PC-9 (cell line): ENCODE measurements at regions of chr10 and their contacts with region 1.

Region 1: DNA sequence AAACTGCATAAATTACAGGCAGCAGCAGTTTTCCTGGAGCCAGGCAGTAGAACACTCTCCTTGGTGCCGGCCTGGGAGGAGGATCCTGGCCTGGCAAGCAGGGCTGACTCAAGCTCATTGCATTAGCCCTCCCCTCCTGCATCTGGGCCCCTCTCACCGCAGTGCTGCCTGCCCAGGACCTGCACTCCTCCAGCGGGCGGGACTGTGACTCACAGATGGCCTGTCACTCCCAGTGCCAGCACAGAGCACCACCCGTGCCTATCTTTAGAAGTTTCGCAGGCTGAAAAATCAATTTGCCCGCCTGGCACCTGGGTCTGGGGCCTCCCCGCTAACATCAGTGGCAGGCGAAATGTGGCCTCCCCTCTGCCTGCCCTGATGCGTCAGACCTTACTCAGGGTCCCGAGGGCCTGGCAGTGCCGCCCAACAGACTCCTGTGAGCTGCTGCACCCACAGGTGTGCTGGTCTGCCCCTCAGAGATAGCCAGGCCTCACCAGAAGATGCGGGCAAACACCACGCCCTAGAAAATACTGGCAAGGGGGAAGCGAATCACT is 123.8 kb downstream of the KCNMA1 start:
- DNase-seq: peak; percentile 92 to 93
- H3K4me3 ChIP-seq: peak overlapping the region; percentile 24; the same call in 1 of the 2 replicates
- H3K27ac ChIP-seq: peak overlapping the region; percentile 73
- H3K4me1 ChIP-seq: peaks cover 47% of the 10 kb centered on the region
- H3K27me3 ChIP-seq: no peaks in the 10 kb centered on the region
- CTCF ChIP-seq: no peak

Region 2: DNA sequence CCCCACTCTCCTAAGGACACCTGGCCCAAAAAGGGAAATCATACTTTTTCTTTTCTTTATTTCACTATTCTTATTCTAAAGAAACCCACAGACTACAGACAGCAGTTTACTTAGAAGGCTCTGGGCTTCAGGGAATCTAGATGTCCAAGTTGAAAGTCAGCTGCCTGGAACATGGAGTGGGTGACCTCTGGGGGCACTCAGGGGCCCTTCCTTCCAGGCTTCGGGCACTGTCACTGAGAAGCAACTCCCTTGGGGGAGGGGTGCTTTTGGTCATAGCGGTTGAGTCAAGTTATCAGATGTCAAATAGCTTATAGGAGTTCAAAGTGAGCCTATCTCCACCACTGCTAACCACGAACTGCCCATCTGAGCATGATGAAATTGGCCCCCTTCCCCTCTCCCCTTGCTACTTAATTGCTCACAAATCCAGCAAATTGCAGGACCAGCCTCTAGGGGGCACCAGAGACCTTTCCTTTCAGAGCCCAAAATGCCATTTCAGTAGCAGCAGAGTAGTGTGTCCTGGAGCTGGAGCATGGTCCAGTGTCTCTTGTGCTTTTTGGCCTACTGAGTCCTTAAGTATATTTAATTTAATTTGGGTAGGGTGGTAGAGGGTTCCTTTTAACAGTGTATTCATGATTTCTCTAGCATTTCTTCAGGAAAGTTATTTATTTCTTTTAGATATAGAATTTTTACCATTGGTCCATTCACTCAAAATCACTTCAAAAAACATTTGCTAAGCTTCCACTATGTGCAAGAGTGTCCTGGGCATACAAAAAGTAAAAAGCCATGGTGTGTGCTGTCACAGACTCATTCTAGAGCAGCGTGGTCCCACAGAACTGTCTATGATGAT is 340.0 kb before region 1 on chr10:
- CTCF ChIA-PET with region 1: interaction called, 3 read pairs
- POLR2A ChIA-PET with region 1: no interaction called
- intact Hi-C with region 1: loop called (anchors 10 kb)
- DNase-seq: peak; percentile 63 to 71
- H3K4me3 ChIP-seq: no peak overlapping the region
- H3K27ac ChIP-seq: no peak overlapping the region
- H3K4me1 ChIP-seq: peaks cover 6% of the 10 kb centered on the region
- H3K27me3 ChIP-seq: no peaks in the 10 kb centered on the region
- CTCF ChIP-seq: peak; percentile 98

Region 3: DNA sequence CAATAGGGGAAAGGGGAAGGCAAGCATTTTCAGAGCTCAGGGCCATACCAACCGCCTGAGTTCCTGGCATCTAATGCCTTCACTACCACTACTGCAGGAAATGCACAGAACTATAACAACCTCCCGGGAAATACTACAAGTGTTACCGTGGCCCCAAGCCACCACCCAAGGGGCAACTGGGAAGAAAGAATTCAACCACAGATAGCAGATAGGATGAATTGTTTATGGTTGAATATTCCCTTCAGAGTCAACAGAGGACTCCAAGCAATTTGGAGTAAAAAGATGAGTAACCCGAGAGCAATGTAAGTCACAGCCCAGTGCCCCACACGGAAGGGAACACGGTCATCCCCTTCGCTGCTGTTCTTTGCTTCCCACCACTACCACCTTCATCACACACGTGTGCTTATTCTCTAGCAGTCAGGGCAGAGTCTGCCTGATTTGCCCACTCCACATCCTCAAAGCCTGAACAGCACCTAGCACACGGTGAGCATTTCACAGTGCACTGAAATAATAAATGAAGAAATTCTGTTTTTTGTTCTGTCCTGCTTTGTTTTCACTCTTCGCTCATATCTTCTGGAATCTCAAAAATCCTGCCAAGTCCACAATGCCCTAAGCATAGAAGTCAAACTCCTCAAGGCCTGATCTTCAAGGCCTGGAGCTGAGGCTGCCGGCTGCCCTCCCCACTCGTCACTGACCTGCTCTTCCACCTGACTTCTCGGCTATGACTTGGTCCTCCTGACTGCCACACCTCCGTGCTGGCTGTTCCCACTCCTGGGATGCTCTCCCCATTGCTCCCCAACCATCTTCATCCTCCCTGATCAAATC is 97.3 kb before region 1 on chr10:
- CTCF ChIA-PET with region 1: no interaction called
- POLR2A ChIA-PET with region 1: no interaction called
- intact Hi-C with region 1: loop called (anchors 2 kb)
- DNase-seq: peak; percentile 73 to 96
- H3K4me3 ChIP-seq: peak overlapping the region; percentile 14; the same call in 1 of the 2 replicates
- H3K27ac ChIP-seq: peak overlapping the region; percentile 82
- H3K4me1 ChIP-seq: peaks cover 36% of the 10 kb centered on the region
- H3K27me3 ChIP-seq: no peaks in the 10 kb centered on the region
- CTCF ChIP-seq: no peak

Region 4: DNA sequence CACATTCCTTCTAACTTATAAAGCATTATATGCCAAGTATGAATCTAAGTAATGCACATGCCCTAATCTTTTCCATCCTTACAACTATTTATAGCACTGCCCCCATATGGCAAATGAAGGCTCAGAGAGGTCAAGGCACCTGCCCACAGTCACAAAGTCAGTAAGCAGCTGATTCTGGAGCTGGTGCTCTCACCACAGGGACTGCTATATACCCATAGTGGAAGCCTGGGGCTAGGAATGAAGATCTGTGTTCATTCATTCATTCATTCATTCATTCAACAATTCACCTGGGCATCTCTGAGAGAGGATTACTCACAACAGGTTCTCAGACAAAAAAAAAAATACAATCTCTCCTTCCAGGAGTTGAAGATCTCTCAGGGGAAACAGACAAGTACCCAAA is 89.6 kb before region 1 on chr10:
- CTCF ChIA-PET with region 1: no interaction called
- POLR2A ChIA-PET with region 1: no interaction called
- intact Hi-C with region 1: loop called (anchors 1 kb)
- DNase-seq: no peak
- H3K4me3 ChIP-seq: no peak overlapping the region
- H3K27ac ChIP-seq: no peak overlapping the region
- H3K4me1 ChIP-seq: no peaks in the 10 kb centered on the region
- H3K27me3 ChIP-seq: no peaks in the 10 kb centered on the region
- CTCF ChIP-seq: no peak

Region 5: DNA sequence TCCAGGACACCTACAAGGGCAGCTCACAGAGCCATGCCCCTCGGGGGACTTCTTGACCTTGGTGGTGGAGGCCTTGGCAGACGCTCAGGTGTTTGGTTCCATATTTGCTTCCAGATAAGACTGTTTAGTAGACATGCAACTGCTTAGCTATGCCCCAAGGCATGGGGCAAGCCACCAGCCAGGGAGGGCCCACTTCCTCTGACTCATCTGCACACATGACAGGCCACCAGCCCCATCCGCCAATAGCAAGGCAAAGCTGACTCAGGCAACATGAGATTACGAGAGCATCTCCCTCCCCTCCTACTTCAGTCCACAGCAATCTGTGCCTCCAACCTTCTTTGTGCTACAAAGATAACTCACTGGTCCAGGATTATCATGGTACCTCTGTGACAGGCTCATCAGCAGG is 68.9 kb after region 1 on chr10:
- CTCF ChIA-PET with region 1: no interaction called
- POLR2A ChIA-PET with region 1: no interaction called
- intact Hi-C with region 1: loop called (anchors 5 kb)
- DNase-seq: peak; percentile 91 to 96
- H3K4me3 ChIP-seq: no peak overlapping the region
- H3K27ac ChIP-seq: peak overlapping the region; percentile 88
- H3K4me1 ChIP-seq: peaks cover 63% of the 10 kb centered on the region
- H3K27me3 ChIP-seq: no peaks in the 10 kb centered on the region
- CTCF ChIP-seq: no peak